ENCODE measurements at regions of chr16 and their contacts with region 1.

Region 1: DNA sequence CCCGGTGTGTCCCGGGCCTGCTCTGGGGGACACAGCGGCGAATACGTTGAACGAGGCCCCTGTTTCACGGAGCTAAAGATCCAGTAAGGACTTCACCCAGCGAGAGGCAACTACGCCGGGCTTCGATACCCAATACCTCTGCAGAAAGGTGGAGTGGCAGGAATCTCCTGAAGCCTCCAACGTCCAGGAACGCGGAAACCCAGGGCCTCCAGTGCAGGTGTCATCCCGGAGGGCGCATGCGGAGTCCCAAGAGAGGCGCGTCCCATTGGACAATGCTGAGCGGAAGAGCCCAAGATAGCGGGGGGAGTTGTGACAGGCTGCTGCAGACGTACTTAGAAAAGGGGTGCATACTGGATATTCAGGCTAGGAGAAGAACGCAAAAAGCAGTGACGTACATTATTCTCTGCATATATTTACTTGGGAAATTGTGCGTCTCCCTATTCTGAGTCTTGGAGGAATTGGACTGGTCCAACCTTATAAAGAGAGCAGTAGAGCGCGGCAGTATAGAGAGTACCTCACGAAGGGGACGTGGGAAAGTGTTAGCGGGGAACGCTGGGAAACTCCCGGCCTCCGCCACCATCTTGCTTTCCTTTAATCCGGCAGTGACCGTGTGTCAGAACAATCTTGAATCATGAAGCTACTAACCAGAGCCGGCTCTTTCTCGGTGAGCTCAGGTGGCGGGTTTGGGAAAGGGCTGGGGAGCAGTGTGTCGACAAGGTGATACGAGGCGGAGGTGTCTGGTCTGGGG is at the start of gene UQCRC2:
- DNase-seq: peak; percentile 70 to 96 (median 87)
- ATAC-seq: peak; percentile 89
- H3K4me3 ChIP-seq: peak within 1 kb of the TSS; percentile 85 to 87
- H3K4me3 Mint-ChIP-seq: peak within 1 kb of the TSS; percentile 100
- H3K27ac ChIP-seq: peak within 1 kb of the TSS; percentile 93 to 95
- H3K27ac Mint-ChIP-seq: peak within 1 kb of the TSS; percentile 98
- H3K4me1 ChIP-seq: peaks cover 36% of the 10 kb centered on the region
- H3K4me1 Mint-ChIP-seq: peaks cover 69% of the 10 kb centered on the region
- H3K27me3 ChIP-seq: no peaks in the 10 kb centered on the region
- H3K27me3 Mint-ChIP-seq: no peaks in the 10 kb centered on the region
- CTCF ChIP-seq: no peak
- total RNA-seq, gene UQCRC2: 177 to 186 TPM

Region 2: GRCh38 chr16:21646721-21647561 is 306.0 kb before region 1 on chr16:
- CTCF ChIA-PET with region 1: no interaction called
- POLR2A ChIA-PET with region 1: no interaction called
- intact Hi-C with region 1: loop called (anchors 5 kb)
- DNase-seq: peak; percentile 42 to 90 (median 71)
- ATAC-seq: peak; percentile 78
- H3K4me3 ChIP-seq: peak overlapping the region in 1 of 2 experiments; percentile 9
- H3K4me3 Mint-ChIP-seq: peak overlapping the region; percentile 74
- H3K27ac ChIP-seq: peak overlapping the region; percentile 58 to 85
- H3K27ac Mint-ChIP-seq: peak overlapping the region; percentile 95
- H3K4me1 ChIP-seq: peaks cover 51% of the 10 kb centered on the region
- H3K4me1 Mint-ChIP-seq: peaks cover 55% of the 10 kb centered on the region
- H3K27me3 ChIP-seq: no peaks in the 10 kb centered on the region
- H3K27me3 Mint-ChIP-seq: no peaks in the 10 kb centered on the region
- CTCF ChIP-seq: no peak

Region 3: GRCh38 chr16:21663889-21664647 is 288.9 kb before region 1 on chr16 and contains the start of gene OTOA:
- CTCF ChIA-PET with region 1: no interaction called
- POLR2A ChIA-PET with region 1: no interaction called
- intact Hi-C with region 1: loop called in 1 of 2 experiments (anchors 5 kb)
- DNase-seq: peak in 6 of 9 experiments; percentile 27 to 63 (median 46)
- ATAC-seq: peak; percentile 67
- H3K4me3 ChIP-seq: peak within 1 kb of the TSS in 1 of 2 experiments; percentile 37
- H3K4me3 Mint-ChIP-seq: peak within 1 kb of the TSS; percentile 81
- H3K27ac ChIP-seq: no peak within 1 kb of the TSS
- H3K27ac Mint-ChIP-seq: no peak within 1 kb of the TSS
- H3K4me1 ChIP-seq: peaks cover 18% of the 10 kb centered on the region
- H3K4me1 Mint-ChIP-seq: peaks cover 26% of the 10 kb centered on the region
- H3K27me3 ChIP-seq: peaks cover 0 to 5% of the 10 kb centered on the region in 2 experiments
- H3K27me3 Mint-ChIP-seq: no peaks in the 10 kb centered on the region
- CTCF ChIP-seq: no peak
- total RNA-seq, gene OTOA: 0.14 TPM in 1 of 2 experiments, not detected in the other

Region 4: GRCh38 chr16:21987498-21987897 is 34.5 kb after region 1 on chr16:
- CTCF ChIA-PET with region 1: no interaction called
- POLR2A ChIA-PET with region 1: no interaction called
- intact Hi-C with region 1: no loop called
- DNase-seq: no peak
- ATAC-seq: no peak
- H3K4me3 ChIP-seq: no peak overlapping the region
- H3K4me3 Mint-ChIP-seq: no peak overlapping the region
- H3K27ac ChIP-seq: no peak overlapping the region
- H3K27ac Mint-ChIP-seq: peak overlapping the region; percentile 6
- H3K4me1 ChIP-seq: no peaks in the 10 kb centered on the region
- H3K4me1 Mint-ChIP-seq: peaks cover 8% of the 10 kb centered on the region
- H3K27me3 ChIP-seq: no peaks in the 10 kb centered on the region
- H3K27me3 Mint-ChIP-seq: no peaks in the 10 kb centered on the region
- CTCF ChIP-seq: no peak

Region 5: GRCh38 chr16:22007509-22008214 is 54.7 kb after region 1 on chr16 and contains the start of gene MOSMO:
- CTCF ChIA-PET with region 1: interaction called, 3 read pairs
- POLR2A ChIA-PET with region 1: interaction called, 3 read pairs
- intact Hi-C with region 1: loop called (anchors 1 kb)
- DNase-seq: peak; percentile 30 to 81 (median 67)
- ATAC-seq: peak; percentile 84
- H3K4me3 ChIP-seq: peak within 1 kb of the TSS; percentile 93 to 95
- H3K4me3 Mint-ChIP-seq: peak within 1 kb of the TSS; percentile 88
- H3K27ac ChIP-seq: peak within 1 kb of the TSS; percentile 70 to 75
- H3K27ac Mint-ChIP-seq: peak within 1 kb of the TSS; percentile 88
- H3K4me1 ChIP-seq: peaks cover 24% of the 10 kb centered on the region
- H3K4me1 Mint-ChIP-seq: peaks cover 46% of the 10 kb centered on the region
- H3K27me3 ChIP-seq: no peaks in the 10 kb centered on the region
- H3K27me3 Mint-ChIP-seq: no peaks in the 10 kb centered on the region
- CTCF ChIP-seq: no peak
- total RNA-seq, gene MOSMO: 2.4 TPM

Region 6: GRCh38 chr16:22027633-22028032 is 74.7 kb after region 1 on chr16:
- CTCF ChIA-PET with region 1: no interaction called
- POLR2A ChIA-PET with region 1: no interaction called
- intact Hi-C with region 1: no loop called
- DNase-seq: no peak
- ATAC-seq: no peak
- H3K4me3 ChIP-seq: no peak overlapping the region
- H3K4me3 Mint-ChIP-seq: no peak overlapping the region
- H3K27ac ChIP-seq: no peak overlapping the region
- H3K27ac Mint-ChIP-seq: no peak overlapping the region
- H3K4me1 ChIP-seq: no peaks in the 10 kb centered on the region
- H3K4me1 Mint-ChIP-seq: peaks cover 21% of the 10 kb centered on the region
- H3K27me3 ChIP-seq: no peaks in the 10 kb centered on the region
- H3K27me3 Mint-ChIP-seq: no peaks in the 10 kb centered on the region
- CTCF ChIP-seq: no peak

Region 7: GRCh38 chr16:22141746-22142145 is 188.8 kb after region 1 on chr16:
- CTCF ChIA-PET with region 1: no interaction called
- POLR2A ChIA-PET with region 1: no interaction called
- intact Hi-C with region 1: no loop called
- DNase-seq: no peak
- ATAC-seq: no peak
- H3K4me3 ChIP-seq: no peak overlapping the region
- H3K4me3 Mint-ChIP-seq: no peak overlapping the region
- H3K27ac ChIP-seq: no peak overlapping the region
- H3K27ac Mint-ChIP-seq: no peak overlapping the region
- H3K4me1 ChIP-seq: no peaks in the 10 kb centered on the region
- H3K4me1 Mint-ChIP-seq: no peaks in the 10 kb centered on the region
- H3K27me3 ChIP-seq: no peaks in the 10 kb centered on the region
- H3K27me3 Mint-ChIP-seq: peaks cover 5% of the 10 kb centered on the region
- CTCF ChIP-seq: no peak

Region 8: DNA sequence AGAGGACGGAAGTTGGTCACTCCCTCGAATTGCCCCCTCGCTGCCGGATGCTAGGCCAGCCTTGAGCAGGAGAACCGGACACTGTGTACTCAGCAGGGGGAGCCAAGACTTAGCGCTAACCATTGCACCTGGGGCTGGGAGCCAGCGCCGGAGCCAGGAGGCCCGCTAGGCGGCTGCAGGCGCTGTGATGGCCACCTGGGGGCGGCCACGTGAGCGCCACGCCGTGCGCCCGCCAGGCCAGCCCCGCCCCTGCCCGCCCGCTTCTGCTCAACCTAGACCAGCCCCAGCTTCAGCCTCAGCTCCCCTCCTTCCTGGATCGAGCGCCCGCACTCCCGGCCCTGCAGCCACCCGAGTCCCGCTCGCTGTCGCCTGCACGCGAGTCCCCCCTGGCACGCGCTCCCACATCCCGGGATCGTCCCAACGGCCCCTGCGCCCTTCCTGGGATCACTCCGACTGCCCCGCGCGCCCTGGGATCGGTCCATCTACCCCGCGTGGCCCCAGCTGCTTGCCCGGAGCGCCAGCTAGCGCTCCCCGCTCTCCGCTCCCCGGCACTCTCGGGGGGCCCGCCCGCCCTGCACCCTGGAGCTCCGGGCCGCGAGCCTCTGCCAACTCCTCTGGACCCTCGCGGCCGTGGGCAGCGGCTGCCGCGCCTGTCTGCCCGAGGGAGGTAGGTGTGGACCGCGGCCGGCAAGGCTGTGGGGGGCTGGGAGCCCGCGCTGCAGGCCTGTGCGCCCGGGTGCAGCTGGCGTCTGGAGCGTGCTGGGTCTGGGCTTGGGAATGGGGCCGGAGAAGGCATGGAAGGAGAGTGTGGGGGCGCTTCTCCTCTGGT is 253.3 kb after region 1 on chr16 and contains the start of gene EEF2K:
- CTCF ChIA-PET with region 1: no interaction called
- POLR2A ChIA-PET with region 1: no interaction called
- intact Hi-C with region 1: loop called in 1 of 2 experiments (anchors 1 kb)
- DNase-seq: peak; percentile 66 to 91 (median 79)
- ATAC-seq: peak; percentile 90
- H3K4me3 ChIP-seq: peak within 1 kb of the TSS; percentile 61 to 86
- H3K4me3 Mint-ChIP-seq: peak within 1 kb of the TSS; percentile 98
- H3K27ac ChIP-seq: peak within 1 kb of the TSS; percentile 51 to 59
- H3K27ac Mint-ChIP-seq: peak within 1 kb of the TSS; percentile 92
- H3K4me1 ChIP-seq: peaks cover 20% of the 10 kb centered on the region
- H3K4me1 Mint-ChIP-seq: peaks cover 40% of the 10 kb centered on the region
- H3K27me3 ChIP-seq: no peaks in the 10 kb centered on the region
- H3K27me3 Mint-ChIP-seq: no peaks in the 10 kb centered on the region
- CTCF ChIP-seq: peak; percentile 65
- total RNA-seq, gene EEF2K: 14.4 to 14.6 TPM

Region 9: DNA sequence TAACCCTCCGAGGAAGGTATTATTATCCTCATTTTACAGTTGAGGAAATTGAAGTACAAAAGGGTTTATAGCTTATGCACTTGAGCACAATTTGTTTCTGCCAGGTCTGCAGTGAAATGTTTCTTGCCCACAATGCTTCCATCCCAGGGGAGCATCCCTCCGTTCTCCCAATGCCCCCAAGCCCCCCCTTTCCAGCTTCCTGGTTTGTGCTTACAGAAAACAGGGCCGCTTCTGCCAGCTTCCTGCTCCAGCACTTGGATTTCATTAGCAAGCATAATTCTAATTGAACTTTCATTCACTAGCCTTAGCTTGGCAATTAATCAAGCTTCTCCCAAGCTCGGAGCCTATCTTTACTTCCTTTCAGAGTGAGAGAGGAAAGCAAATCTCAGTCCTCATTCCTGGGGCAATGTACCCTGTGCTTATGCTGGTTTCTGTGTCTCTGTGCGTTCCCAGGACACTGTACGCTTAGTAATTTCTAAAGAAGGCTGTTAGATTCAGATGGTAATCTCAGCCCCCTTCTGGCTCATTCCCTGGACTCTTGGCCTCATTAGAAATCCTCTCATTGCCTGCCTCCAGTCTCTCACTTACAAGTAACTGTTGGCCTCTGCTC is 1002.6 kb after region 1 on chr16:
- CTCF ChIA-PET with region 1: no interaction called
- POLR2A ChIA-PET with region 1: no interaction called
- intact Hi-C with region 1: no loop called
- DNase-seq: no peak
- ATAC-seq: no peak
- H3K4me3 ChIP-seq: no peak overlapping the region
- H3K4me3 Mint-ChIP-seq: no peak overlapping the region
- H3K27ac ChIP-seq: no peak overlapping the region
- H3K27ac Mint-ChIP-seq: no peak overlapping the region
- H3K4me1 ChIP-seq: no peaks in the 10 kb centered on the region
- H3K4me1 Mint-ChIP-seq: no peaks in the 10 kb centered on the region
- H3K27me3 ChIP-seq: no peaks in the 10 kb centered on the region
- H3K27me3 Mint-ChIP-seq: peaks cover 16% of the 10 kb centered on the region
- CTCF ChIP-seq: no peak

Region 10: DNA sequence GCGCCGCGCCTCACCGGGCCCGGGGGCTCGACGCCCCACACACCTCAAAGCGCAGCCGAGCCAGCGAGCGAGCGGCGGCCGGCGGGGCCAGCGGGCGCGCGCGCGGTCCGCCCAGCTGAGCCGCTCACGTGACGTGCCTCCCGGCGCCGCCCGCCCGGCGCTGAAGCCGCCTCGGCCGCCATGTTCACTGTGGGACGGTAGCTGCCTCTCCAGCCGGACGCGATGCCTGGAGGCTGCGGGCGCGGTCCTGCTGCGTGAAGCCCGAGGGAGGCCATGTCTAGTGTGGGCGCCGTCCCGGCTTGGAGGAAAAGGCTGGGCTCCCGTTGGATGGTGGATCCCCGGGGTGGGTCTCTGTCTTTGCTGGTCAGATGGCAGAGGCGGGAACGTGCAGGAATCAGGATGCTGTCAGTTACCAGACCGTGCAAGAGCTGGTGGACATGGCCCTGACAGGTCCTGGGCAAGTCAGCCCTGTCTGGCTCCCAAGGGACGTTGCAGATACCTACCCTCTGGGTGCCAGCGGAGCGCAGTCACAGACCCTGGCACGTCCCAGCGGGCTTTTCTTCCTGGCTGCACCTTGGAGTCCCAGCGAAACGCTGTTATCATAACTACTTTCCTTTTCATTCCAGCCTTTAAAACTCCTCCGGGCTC is 1196.5 kb after region 1 on chr16 and contains the start of gene USP31:
- CTCF ChIA-PET with region 1: no interaction called
- POLR2A ChIA-PET with region 1: no interaction called
- intact Hi-C with region 1: loop called (anchors 5 kb)
- DNase-seq: peak; percentile 76 to 95 (median 87)
- ATAC-seq: peak; percentile 95
- H3K4me3 ChIP-seq: peak within 1 kb of the TSS; percentile 64 to 78
- H3K4me3 Mint-ChIP-seq: peak within 1 kb of the TSS; percentile 94
- H3K27ac ChIP-seq: peak within 1 kb of the TSS; percentile 17 to 37
- H3K27ac Mint-ChIP-seq: peak within 1 kb of the TSS; percentile 64
- H3K4me1 ChIP-seq: peaks cover 10% of the 10 kb centered on the region
- H3K4me1 Mint-ChIP-seq: peaks cover 20% of the 10 kb centered on the region
- H3K27me3 ChIP-seq: no peaks in the 10 kb centered on the region
- H3K27me3 Mint-ChIP-seq: peaks cover 5% of the 10 kb centered on the region
- CTCF ChIP-seq: no peak
- total RNA-seq, gene USP31: 1.6 to 1.8 TPM

Measured in CD8-positive, alpha-beta T cell (primary cell).